Colonic mucosa (tissue), 4 donors: ENCODE measurements at regions of chr9 and their contacts with region 1.

Region 1: DNA sequence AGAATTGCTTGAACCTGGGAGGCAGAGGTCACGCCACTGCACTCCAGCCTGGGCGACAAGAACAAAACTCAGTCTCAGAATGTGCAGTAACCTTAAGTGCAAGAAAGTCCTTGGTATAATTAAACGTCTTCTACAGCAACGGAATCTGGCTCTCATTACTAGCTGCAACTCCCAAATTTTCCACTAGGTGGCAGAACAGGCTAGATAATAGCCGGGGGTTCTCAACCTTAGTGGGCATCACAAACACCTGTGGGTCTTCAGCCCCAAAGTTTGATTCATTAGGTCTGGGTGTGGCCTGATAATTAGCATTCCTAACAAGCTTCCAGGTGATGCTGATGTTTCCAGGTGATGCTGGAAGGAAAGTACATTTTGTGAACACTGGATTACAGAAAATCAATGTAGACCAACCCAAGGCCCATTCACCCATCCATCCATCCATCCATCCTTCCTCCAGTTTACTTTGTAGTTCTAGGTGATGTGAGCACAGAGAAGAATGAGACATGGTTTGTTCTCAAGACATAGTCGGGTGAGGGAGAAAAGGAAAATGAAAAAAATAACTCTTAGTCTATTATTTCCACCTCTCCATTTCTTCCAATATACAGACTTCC is 37.3 kb downstream of the FBXW2 start:
- DNase-seq: peak; percentile 71
- H3K4me3 ChIP-seq: no peak overlapping the region
- H3K27ac ChIP-seq: no peak overlapping the region
- H3K4me1 ChIP-seq: no peaks in the 10 kb centered on the region
- H3K27me3 ChIP-seq: no peaks in the 10 kb centered on the region
- CTCF ChIP-seq: peak; percentile 93

Region 2: GRCh38 chr9:120608421-120608820 is 147.5 kb before region 1 on chr9:
- intact Hi-C with region 1: no loop called
- DNase-seq: no peak
- H3K4me3 ChIP-seq: no peak overlapping the region
- H3K27ac ChIP-seq: no peak overlapping the region
- H3K4me1 ChIP-seq: no peaks in the 10 kb centered on the region
- H3K27me3 ChIP-seq: no peaks in the 10 kb centered on the region
- CTCF ChIP-seq: no peak

Region 3: DNA sequence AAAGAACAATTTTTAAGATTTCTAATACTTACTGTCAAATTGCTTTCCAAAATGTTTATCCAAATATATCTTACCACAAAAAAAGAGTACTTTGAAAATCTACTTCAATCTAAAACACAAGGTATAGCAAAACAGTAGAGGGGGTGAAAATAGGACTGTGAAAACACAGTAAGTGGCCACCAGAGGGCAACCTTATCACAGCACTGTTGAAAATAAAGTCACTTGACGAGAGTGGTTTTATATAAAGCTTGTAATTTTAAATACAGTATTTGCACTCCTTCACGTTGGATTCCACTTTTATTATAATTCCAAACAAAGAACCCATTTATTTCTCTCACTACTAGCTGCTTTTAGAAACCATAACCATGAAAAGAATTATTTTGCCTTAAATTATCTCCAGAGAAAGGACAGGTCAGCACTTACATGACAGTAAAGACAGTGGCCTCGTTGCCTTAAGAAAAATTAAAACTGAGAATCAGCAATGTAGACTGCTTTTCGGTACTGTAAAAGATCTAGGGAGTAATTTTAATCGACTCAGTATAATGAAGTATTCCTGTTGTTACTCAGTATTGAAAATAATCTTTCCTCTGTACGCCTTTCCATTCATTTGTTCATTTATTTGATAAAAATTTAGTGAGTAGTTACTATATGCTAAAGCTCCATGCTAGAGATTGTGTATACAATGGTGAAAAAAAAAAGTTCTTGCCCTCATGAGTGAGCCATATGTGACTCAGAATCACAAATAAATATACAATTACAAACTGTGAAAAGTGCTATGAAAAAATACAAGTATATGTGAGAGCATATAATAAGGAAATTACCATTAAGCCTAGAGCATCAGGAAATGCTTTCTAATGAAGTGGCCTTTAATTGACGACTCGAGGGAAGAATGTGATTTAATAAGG is 135.9 kb before region 1 on chr9:
- intact Hi-C with region 1: loop called (anchors 10 kb)
- DNase-seq: peak; percentile 50
- H3K4me3 ChIP-seq: no peak overlapping the region
- H3K27ac ChIP-seq: no peak overlapping the region
- H3K4me1 ChIP-seq: no peaks in the 10 kb centered on the region
- H3K27me3 ChIP-seq: no peaks in the 10 kb centered on the region
- CTCF ChIP-seq: peak; percentile 78

Region 4: DNA sequence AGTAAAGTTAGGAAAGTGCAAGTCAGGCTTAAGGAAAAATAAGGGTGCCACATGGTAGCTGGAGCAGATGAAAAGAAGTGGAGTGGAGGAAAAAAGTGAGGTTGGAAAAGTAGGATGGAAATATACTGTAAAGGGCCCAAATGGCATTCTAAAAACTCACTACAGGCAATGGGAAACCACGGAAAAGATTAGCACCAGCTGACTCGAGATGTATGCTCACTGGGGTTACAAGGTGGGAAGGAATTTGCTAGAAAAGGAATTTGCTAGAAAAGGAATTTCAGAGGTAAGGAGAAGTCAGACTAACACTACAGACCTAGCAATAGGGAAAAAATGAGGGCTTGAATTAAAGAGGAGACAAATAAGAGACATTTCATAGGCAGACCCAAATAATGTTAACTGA is 83.2 kb after region 1 on chr9:
- intact Hi-C with region 1: no loop called
- DNase-seq: no peak
- H3K4me3 ChIP-seq: no peak overlapping the region
- H3K27ac ChIP-seq: no peak overlapping the region
- H3K4me1 ChIP-seq: peaks cover 3% of the 10 kb centered on the region
- H3K27me3 ChIP-seq: no peaks in the 10 kb centered on the region
- CTCF ChIP-seq: no peak

Region 5: DNA sequence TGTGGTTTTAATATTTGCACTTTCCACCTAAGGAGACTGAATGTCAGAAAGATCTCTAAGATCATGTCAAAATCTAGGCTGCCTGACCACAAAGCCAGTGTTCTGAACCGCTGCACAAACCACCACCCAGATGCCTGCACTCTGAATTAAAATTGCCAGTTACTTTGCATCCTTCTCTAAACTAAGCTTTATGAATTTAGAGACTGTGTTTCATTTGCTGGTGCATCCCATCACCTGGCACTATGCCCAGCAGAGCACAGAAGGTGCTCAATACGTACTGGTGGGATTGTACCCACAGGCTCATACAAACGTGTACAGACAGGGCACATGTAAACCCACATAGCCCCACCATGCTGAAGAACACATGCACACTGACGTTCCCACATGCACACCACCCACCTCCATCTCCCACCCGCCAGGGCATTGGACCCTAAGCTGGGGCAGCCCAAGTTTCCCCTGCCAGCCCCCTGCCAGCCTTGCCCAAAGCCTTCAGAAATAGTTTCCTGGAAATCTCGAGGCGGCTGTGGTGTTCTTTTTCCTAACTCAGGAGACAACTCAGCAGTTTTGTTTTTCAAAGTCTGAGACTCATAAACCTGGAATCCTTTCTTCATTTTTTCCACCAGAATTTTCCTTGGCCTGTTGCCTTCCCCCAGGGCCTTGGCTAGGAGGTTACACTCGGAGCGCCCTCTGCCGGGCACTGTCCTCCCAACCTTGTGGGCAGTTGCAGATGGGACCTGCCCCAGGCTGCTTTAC is 180.3 kb after region 1 on chr9:
- intact Hi-C with region 1: loop called (anchors 2 kb)
- DNase-seq: peak; percentile 98
- H3K4me3 ChIP-seq: no peak overlapping the region
- H3K27ac ChIP-seq: peak overlapping the region; percentile 40
- H3K4me1 ChIP-seq: peaks cover 5% of the 10 kb centered on the region
- H3K27me3 ChIP-seq: no peaks in the 10 kb centered on the region
- CTCF ChIP-seq: peak; percentile 84

Region 6: DNA sequence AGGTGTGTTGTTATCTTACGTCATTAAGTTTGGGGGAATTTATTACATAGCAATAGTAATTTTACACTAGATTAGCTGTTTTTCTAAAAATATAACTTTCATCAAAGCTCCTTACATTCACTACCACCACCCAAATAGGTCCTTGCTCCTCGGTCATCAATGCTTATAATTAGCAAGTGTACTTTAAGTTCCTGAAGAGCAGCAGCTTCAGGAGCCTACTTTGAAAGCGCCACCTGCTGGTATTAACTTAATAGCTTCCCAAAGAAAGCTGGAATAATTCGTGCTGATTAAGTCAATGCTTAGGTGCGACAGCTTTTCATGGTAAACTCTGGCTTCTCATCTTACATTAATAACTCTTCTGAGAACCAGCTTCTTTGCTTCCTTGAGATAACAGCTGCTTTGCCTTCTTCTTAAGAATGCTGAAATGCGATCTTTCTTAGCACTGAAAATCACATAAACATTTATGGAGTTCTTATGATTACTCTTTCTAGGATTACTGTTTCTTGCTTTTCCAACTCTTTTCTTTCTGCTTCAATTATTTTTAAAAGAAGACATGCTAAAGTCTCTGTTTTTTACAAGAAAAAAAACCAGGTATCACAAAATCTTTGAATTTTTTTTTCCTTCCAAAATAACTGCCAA is 304.2 kb after region 1 on chr9:
- intact Hi-C with region 1: loop called (anchors 5 kb)
- DNase-seq: peak; percentile 30
- H3K4me3 ChIP-seq: no peak overlapping the region
- H3K27ac ChIP-seq: no peak overlapping the region
- H3K4me1 ChIP-seq: no peaks in the 10 kb centered on the region
- H3K27me3 ChIP-seq: no peaks in the 10 kb centered on the region
- CTCF ChIP-seq: peak; percentile 65